Mammary epithelial cell (primary cell): ENCODE measurements at regions of chr10 and their contacts with region 1.

Region 1: GRCh38 chr10:17290226-17290625 is 62.2 kb downstream of the VIM start:
- DNase-seq: peak; percentile 23
- H3K4me3 ChIP-seq: no peak overlapping the region
- H3K27ac ChIP-seq: no peak overlapping the region
- H3K4me1 ChIP-seq: no peaks in the 10 kb centered on the region
- H3K27me3 ChIP-seq: no peaks in the 10 kb centered on the region
- CTCF ChIP-seq: peak; percentile 34 to 63

Region 2: DNA sequence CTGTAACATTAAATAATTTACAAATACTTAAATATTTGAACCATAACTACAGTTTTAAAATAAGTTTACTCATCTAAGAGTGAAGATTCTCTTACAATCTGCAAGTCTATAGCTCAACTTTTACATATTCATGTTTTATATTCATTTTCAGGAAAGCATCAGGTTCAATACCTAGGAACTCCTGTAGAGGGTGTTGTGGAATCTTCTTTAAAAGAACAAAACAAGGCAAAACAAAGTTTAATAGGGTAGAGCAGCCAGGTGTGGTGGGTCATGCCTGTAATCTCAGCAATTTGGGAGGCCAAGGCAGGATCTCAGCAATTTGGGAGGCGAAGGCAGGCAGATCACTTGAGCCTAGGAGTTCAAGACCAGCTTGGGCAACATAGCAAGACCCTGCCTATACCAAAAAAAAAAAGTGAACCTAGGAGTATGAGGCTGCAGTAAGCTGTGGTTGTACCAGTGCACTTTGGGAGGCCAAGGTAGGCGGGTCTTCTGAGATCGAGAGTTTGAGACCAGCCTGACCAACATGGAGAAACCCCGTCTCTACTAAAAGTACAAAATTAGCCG is 119.0 kb after region 1 on chr10:
- CTCF ChIA-PET with region 1: no interaction called
- dilution Hi-C with region 1: no loop called
- in situ Hi-C with region 1: no loop called
- intact Hi-C with region 1: loop called (anchors 5 kb)
- DNase-seq: no peak
- H3K4me3 ChIP-seq: no peak overlapping the region
- H3K27ac ChIP-seq: no peak overlapping the region
- H3K4me1 ChIP-seq: no peaks in the 10 kb centered on the region
- H3K27me3 ChIP-seq: peaks cover 2% of the 10 kb centered on the region
- CTCF ChIP-seq: peak; percentile 53 to 54

Region 3: DNA sequence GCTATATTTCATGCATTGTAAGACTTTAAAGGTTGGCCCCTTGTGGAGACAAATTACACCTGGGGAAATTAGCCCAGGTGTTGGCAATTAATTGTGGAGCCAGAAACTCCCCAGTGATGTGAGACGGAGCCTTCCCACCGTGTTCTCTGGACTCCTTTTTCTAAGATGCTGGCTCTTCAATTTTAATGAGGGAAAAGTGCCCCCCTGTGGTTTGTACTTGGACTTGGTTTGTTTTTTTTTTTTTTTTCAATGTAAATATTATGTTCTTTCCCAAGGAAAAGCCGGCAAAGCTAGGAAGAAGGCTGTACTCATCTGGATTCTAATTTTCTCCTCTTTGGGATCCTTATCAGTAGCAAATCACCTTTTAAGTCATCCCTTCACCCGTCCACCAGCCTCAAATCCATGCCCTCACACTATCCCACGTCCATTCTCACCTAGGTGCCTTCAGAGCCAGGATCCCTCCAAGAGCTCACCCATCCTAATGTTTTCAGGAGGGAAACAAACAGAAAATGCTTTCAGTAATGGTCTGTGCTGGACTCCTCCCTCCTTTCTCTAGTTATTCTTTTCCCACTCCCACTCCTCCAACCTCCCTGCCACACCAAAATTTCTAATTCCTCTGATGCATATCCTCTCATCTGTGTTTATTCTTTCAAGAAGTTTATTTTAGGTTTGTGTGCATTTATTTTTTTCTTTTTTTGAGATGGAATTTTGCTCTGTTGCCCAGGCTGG is 184.5 kb after region 1 on chr10:
- CTCF ChIA-PET with region 1: no interaction called
- dilution Hi-C with region 1: no loop called
- in situ Hi-C with region 1: no loop called
- intact Hi-C with region 1: loop called (anchors 1 kb)
- DNase-seq: no peak
- H3K4me3 ChIP-seq: no peak overlapping the region
- H3K27ac ChIP-seq: no peak overlapping the region
- H3K4me1 ChIP-seq: no peaks in the 10 kb centered on the region
- H3K27me3 ChIP-seq: no peaks in the 10 kb centered on the region
- CTCF ChIP-seq: peak in 1 of 2 donors; percentile 20